Activated CD4-positive, alpha-beta T cell treated with anti-CD3 and anti-CD28 coated beads, Interleukin-2, amount 10 ng/mL, durations not matched to agents 24 days and 14 days (primary cell): ENCODE measurements at regions of chr12 and their contacts with region 1.

Region 1: DNA sequence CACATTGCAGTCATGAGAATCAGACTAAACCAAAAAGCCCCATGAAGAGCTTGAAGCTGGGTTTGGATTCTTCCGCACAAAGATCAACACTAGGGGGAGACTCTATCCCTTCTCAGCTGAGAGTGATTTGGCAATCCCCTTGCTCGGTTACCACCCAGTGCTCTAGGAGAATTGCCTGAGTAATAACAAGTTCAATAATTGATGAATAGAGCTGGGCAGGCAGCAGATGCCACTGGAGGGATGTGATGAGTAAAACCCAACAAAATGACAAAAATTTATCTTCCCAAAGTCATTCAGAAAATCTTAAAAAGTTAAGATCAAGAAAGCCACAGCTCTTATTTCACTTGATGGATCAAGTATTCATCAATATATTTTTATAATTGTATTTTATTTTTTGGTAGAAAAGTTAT is 185.6 kb upstream of the ARID2 start:
- DNase-seq: peak; percentile 90
- H3K4me3 Mint-ChIP-seq: no peak overlapping the region
- H3K27ac Mint-ChIP-seq: no peak overlapping the region
- H3K4me1 Mint-ChIP-seq: peaks cover 4% of the 10 kb centered on the region
- H3K27me3 Mint-ChIP-seq: peaks cover 24% of the 10 kb centered on the region

Region 2: DNA sequence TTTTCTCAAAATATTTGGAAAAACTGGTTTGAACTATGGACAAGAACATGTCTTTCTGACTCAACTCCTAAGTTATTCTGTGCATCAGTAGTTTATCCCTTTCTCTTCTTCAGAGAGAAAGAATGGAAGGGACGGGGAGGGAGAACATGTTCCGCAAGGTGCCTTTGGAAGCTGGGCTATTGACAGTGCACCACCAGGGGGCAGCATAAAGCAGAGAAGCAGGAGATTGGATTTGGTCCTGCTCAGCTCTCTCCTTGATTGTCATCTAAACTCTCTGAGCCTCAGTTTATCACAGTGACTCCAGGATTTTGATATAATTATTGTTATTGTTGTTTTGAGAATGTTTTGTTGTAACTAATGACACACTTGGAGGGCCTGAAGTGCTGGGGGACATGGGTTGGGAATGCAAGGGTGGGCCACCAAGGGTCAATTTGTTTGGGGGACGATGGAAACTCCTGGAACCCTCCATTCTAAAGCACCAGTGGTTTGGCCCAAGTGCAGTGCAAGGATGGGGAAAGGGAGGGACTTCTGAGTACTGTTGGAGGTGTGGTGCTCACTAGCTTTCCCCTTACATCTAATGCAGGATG is 373.4 kb before region 1 on chr12:
- intact Hi-C with region 1: loop called (anchors 10 kb)
- DNase-seq: peak; percentile 92
- H3K4me3 Mint-ChIP-seq: no peak overlapping the region
- H3K27ac Mint-ChIP-seq: no peak overlapping the region
- H3K4me1 Mint-ChIP-seq: no peaks in the 10 kb centered on the region
- H3K27me3 Mint-ChIP-seq: peaks cover 4% of the 10 kb centered on the region

Region 3: DNA sequence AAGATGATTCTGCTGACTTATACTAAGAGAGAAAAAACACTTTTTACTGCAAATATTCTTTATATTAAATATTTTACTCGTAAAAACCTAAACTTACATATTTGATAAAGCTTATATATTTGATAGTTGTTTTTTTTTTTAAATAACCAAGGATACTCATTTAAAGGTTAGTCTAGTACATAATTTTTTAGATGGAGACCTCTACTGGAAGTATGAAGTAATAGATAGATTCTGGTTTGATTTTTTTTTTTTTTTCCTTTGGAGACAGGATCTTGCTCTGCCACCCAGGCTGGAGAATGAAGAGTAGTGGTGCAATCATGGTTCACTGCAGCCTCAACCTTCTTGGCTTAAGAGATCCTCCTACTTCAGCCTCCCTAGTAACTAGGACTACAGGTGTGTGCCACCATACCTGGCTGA is 202.0 kb after region 1 on chr12:
- intact Hi-C with region 1: loop called (anchors 5 kb)
- DNase-seq: no peak
- H3K4me3 Mint-ChIP-seq: no peak overlapping the region
- H3K27ac Mint-ChIP-seq: no peak overlapping the region
- H3K4me1 Mint-ChIP-seq: peaks cover 39% of the 10 kb centered on the region
- H3K27me3 Mint-ChIP-seq: no peaks in the 10 kb centered on the region

Region 4: GRCh38 chr12:46005151-46005797 is 461.4 kb after region 1 on chr12:
- intact Hi-C with region 1: loop called (anchors 10 kb)
- DNase-seq: peak; percentile 48
- H3K4me3 Mint-ChIP-seq: no peak overlapping the region
- H3K27ac Mint-ChIP-seq: no peak overlapping the region
- H3K4me1 Mint-ChIP-seq: no peaks in the 10 kb centered on the region
- H3K27me3 Mint-ChIP-seq: peaks cover 7% of the 10 kb centered on the region